Transverse colon (tissue), 4 donors: ENCODE measurements at regions of chr7 and their contacts with region 1.

Region 1: GRCh38 chr7:90070227-90070626 is 84.0 kb upstream of the STEAP1 start:
- DNase-seq: no peak
- H3K4me3 ChIP-seq: no peak overlapping the region
- H3K27ac ChIP-seq: no peak overlapping the region
- H3K4me1 ChIP-seq: no peaks in the 10 kb centered on the region
- H3K27me3 ChIP-seq: no peaks in the 10 kb centered on the region
- CTCF ChIP-seq: no peak
- EP300 ChIP-seq: no peak
- POLR2A ChIP-seq: no peak

Region 2: GRCh38 chr7:89966067-89966665 is 104.1 kb before region 1 on chr7:
- in situ Hi-C with region 1: loop called in 1 of 4 experiments (anchors 25 kb)
- intact Hi-C with region 1: no loop called
- DNase-seq: no peak
- H3K4me3 ChIP-seq: no peak overlapping the region
- H3K27ac ChIP-seq: no peak overlapping the region
- H3K4me1 ChIP-seq: no peaks in the 10 kb centered on the region
- H3K27me3 ChIP-seq: no peaks in the 10 kb centered on the region
- CTCF ChIP-seq: no peak
- EP300 ChIP-seq: no peak
- POLR2A ChIP-seq: no peak

Region 3: GRCh38 chr7:91020636-91021385 is 950.6 kb after region 1 on chr7:
- in situ Hi-C with region 1: no loop called
- intact Hi-C with region 1: no loop called
- DNase-seq: no peak
- H3K4me3 ChIP-seq: no peak overlapping the region
- H3K27ac ChIP-seq: no peak overlapping the region
- H3K4me1 ChIP-seq: no peaks in the 10 kb centered on the region
- H3K27me3 ChIP-seq: no peaks in the 10 kb centered on the region
- CTCF ChIP-seq: no peak
- EP300 ChIP-seq: no peak
- POLR2A ChIP-seq: no peak